ENCODE measurements at regions of chr9 and their contacts with region 1.

Region 1: DNA sequence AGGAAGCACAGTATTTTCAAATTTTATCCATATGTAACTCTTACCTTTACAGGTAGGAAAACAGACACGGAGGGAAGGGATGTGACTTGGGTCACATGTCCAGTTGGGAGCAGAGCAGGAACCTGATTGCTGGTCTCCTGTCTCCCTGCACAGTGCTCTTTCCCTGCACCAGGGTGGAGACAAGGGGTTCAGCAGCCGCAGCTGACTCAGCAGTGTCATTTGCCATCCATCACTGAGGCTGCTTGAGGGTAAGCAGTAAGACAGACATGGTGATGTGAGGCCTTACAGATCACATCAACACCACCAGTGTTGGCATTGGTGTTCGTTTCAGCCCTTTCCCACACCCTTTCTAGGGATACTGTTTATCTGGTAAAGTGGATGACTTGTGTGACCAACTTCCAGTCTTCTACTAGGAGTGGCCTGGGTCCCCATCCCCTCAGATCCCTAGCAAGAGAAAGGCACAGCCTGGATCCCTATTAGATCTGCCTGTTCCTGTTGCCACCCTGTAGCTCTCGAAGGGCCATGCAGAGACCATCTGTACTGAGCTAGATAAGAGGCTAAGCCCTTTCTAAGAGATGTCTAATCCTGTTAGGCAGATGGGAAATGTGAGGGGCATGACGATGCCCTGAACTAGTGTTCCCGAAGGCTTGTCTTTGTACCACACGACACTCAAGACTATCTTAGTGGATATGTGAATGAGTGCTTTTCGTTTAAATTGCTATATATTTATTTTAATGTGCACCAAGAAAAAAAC is 29.1 kb downstream of the FRMPD1 start:
- DNase-seq: no peak
- ATAC-seq: no peak
- H3K4me3 ChIP-seq: no peak overlapping the region
- H3K27ac ChIP-seq: no peak overlapping the region
- H3K4me1 ChIP-seq: no peaks in the 10 kb centered on the region
- H3K27me3 ChIP-seq: no peaks in the 10 kb centered on the region
- CTCF ChIP-seq: no peak
- POLR2A ChIP-seq: no peak

Region 2: GRCh38 chr9:36676778-36677485 is 1002.9 kb before region 1 on chr9:
- intact Hi-C with region 1: no loop called
- DNase-seq: no peak
- ATAC-seq: no peak
- H3K4me3 ChIP-seq: no peak overlapping the region
- H3K27ac ChIP-seq: no peak overlapping the region
- H3K4me1 ChIP-seq: no peaks in the 10 kb centered on the region
- H3K27me3 ChIP-seq: no peaks in the 10 kb centered on the region
- CTCF ChIP-seq: no peak
- POLR2A ChIP-seq: no peak

Region 3: DNA sequence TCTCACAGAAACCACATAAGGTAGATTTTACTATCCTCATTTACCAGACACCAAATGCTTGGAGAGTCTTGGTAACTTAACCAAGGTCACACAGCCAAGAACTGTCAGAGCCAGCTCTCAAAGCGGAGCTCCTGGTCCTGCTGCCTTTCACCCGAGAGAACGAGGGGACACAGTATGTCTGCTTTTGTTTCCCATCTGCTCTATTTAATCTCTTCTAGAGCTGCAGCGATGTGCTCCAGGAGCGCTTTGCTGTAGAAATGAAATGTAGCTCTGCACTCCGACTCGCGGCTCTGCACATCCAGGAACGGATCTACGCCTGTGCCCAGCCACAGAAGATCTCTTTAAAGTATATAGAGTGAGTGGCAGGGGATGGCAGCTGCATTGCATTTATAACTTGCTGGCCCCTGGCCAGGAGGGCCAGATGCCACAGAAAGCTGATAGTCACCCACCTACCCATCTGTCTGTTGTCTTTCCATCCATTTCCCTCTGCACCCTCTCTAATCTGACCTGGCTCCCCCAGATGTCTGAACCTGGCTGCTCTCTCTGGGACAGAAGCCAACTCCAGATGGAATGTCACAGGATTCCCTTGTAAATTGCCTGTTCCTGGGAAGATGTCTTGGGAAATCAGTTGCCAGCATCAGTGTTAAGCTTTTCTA is 52.4 kb after region 1 on chr9:
- intact Hi-C with region 1: loop called (anchors 5 kb)
- DNase-seq: no peak
- ATAC-seq: no peak
- H3K4me3 ChIP-seq: no peak overlapping the region
- H3K27ac ChIP-seq: no peak overlapping the region
- H3K4me1 ChIP-seq: no peaks in the 10 kb centered on the region
- H3K27me3 ChIP-seq: no peaks in the 10 kb centered on the region
- CTCF ChIP-seq: no peak
- POLR2A ChIP-seq: no peak

Region 4: DNA sequence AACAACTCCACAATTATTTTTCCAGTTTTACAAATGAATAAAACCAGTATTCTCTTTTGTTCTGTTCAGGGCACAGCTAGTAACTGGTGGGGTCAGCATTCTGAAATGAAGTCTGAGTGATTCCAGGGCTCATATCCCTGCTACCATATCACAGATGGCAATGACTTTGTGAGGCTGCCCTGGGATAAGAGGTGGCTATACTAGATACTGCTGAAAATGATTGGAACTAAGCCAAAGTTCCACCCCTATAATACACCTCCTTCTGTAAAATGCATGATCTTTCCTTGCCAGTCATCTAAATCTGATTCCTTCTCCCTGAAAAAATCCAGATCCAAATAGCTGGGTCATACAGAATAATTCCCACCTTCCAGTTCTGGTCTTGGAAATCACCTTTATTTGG is 209.7 kb after region 1 on chr9:
- intact Hi-C with region 1: no loop called
- DNase-seq: no peak
- ATAC-seq: no peak
- H3K4me3 ChIP-seq: no peak overlapping the region
- H3K27ac ChIP-seq: no peak overlapping the region
- H3K4me1 ChIP-seq: no peaks in the 10 kb centered on the region
- H3K27me3 ChIP-seq: no peaks in the 10 kb centered on the region
- CTCF ChIP-seq: no peak
- POLR2A ChIP-seq: no peak